GM12878 (cell line): ENCODE measurements at regions of chr4 and their contacts with region 1.

Region 1: GRCh38 chr4:2412885-2413716 is 5.3 kb downstream of the ZFYVE28 start:
- DNase-seq: peak; percentile 91
- ATAC-seq: peak; percentile 81
- H3K4me3 ChIP-seq: peak overlapping the region; percentile 58
- H3K27ac ChIP-seq: peak overlapping the region; percentile 60
- H3K4me1 ChIP-seq: peaks cover 49% of the 10 kb centered on the region
- H3K27me3 ChIP-seq: peaks cover 9 to 12% of the 10 kb centered on the region in 2 experiments
- CTCF ChIP-seq: peak in 2 of 3 experiments; percentile 31 to 42; a peak in 3 of 6 replicates
- EP300 ChIP-seq: peak; percentile 19 to 56; a peak in 1 of 4 replicates
- POLR2A ChIP-seq: no peak
- RAD21 ChIP-seq: no peak

Region 2: DNA sequence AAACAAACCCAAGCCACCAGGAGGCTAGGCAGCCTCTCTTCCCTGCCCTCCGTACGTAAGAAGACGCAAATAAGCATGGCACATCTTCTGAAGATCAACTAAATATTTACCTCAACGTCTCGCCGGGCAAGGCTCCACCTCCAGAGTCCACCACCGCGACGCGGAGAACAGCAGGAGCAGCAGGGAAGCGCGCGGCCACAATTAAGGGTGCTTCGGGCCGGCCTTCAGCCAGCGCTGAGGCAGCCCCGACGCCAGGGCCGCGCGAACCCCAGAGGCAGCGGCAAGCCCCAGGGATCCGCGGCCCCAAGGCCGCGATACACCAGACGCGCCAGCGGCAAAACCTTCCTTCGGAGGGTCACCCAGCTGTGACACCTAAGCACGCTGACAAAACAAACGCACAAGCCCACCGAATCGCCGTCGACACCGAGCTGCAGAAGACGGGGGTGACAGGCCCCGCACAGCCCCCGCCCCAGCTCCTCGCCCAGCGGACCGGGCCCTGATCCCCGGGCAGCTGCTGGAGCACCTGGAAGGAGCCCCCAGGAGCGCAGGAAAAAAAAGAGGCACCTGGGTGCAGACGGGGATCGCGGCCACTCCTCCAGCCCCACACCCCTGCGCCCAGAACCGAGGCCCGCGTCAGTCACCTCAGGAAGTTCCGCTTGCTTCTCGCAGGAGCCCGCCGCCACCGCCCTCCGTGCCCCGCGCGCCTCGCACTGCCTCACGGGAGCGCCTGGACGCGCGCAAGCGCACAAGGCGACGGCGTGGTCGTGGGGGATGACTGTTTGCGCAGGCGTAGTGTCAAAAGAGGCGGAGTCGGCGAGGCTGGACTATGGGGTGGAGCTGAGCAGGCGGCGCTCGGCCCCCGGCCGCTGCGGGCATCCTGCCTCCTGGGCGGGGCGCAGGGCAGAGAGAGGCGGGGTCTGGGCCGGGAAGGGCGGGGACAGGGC is 171.4 kb before region 1 on chr4 and contains the starts of genes HAUS3 and POLN:
- CTCF ChIA-PET with region 1: interaction called, 10 read pairs
- POLR2A ChIA-PET with region 1: interaction called, 4 read pairs
- RAD21 ChIA-PET with region 1: interaction called, 4 read pairs
- SMC1A ChIA-PET with region 1: interaction called, 21 read pairs
- in situ Hi-C with region 1: no loop called
- intact Hi-C with region 1: loop called (anchors 5 kb)
- DNase-seq: peak; percentile 94
- ATAC-seq: peak; percentile 95
- H3K4me3 ChIP-seq: peak within 1 kb of the TSS; percentile 78
- H3K27ac ChIP-seq: peak within 1 kb of the TSS; percentile 70
- H3K4me1 ChIP-seq: peaks cover 6% of the 10 kb centered on the region; the same call in 1 of the 2 replicates
- H3K27me3 ChIP-seq: no peaks in the 10 kb centered on the region
- CTCF ChIP-seq: no peak
- EP300 ChIP-seq: no peak
- POLR2A ChIP-seq: peak; percentile 92
- RAD21 ChIP-seq: no peak
- polyA plus RNA-seq, gene HAUS3: 4.2 to 7.3 TPM
- polyA plus RNA-seq, gene POLN: 0.09 TPM in 1 of 2 experiments, not detected in the other

Region 3: DNA sequence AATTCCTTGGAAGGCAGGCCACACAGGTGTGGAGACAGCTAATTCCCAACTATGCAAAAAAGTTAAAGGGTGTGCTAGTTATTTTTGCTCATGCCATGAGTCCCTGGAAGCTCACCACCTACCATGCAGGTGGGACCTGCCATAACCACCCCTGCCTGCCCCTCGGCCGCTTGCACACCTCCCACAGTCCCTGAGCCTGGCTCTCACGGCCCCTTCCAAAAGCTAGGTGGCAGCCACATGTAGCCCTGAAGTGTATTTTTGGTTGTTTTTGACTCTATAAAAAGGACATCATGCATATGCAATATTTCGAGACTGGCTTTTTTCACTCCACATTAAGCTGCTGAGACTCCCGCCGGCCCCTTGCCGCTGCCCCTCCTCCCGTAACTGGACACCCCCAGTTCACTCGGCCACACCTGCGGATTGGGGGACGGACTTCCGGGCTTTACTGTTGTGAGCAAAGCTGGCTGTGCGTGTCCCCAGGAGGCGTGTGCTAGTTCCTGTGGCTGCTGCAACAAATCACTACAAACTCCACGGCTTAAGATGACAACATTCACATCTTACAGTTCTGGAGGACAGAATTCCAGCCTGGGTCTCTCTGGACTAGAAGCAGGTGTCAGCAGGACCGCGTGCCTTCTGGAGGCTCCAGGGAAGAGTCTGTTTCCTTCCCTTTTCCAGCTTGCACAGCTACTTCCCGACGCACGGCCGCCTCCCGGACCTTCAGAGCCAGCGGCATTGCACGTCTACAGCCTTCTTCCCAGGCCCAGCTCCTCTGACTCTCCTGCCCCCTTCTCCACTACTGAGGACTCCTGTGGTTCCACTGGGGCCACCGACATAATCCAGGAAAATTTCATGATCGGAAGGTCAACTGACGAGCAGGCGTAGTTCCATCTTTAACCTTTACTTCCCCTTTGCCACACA is 19.5 kb before region 1 on chr4:
- CTCF ChIA-PET with region 1: interaction called, 15 read pairs
- POLR2A ChIA-PET with region 1: interaction called, 4 read pairs
- RAD21 ChIA-PET with region 1: no interaction called
- SMC1A ChIA-PET with region 1: interaction called, 12 read pairs
- in situ Hi-C with region 1: no loop called
- intact Hi-C with region 1: no loop called
- DNase-seq: no peak
- ATAC-seq: peak; percentile 85
- H3K4me3 ChIP-seq: 0 out of 2 replicates have a peak overlapping the region, but pooled peaks have one; percentile 5
- H3K27ac ChIP-seq: no peak overlapping the region
- H3K4me1 ChIP-seq: no peaks in the 10 kb centered on the region
- H3K27me3 ChIP-seq: no peaks in the 10 kb centered on the region
- CTCF ChIP-seq: no peak; a peak in 1 of 6 replicates
- EP300 ChIP-seq: no peak
- POLR2A ChIP-seq: no peak
- RAD21 ChIP-seq: no peak

Region 4: DNA sequence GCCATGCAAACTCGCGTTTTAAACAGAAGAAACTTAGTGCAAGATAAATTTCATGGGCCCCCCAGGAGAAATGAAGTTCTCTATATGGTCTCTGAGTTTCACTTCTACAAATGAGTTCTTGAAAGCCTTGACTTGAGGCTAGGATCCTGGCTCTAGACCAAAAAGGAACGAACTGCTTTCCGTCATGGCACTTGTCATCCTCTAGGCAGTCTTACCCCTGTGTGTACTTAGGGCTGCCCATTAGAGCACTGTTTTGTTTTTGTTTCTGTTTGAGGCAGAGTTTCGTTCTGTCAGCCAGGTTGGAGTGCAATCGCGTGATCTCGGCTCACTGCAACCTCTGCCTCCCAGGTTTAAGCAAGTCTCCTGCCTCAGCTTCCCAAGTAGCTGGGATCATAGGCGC is 84.8 kb after region 1 on chr4:
- CTCF ChIA-PET with region 1: no interaction called
- POLR2A ChIA-PET with region 1: no interaction called
- RAD21 ChIA-PET with region 1: no interaction called
- SMC1A ChIA-PET with region 1: no interaction called
- in situ Hi-C with region 1: no loop called
- intact Hi-C with region 1: no loop called
- DNase-seq: peak; percentile 90
- ATAC-seq: peak; percentile 98
- H3K4me3 ChIP-seq: no peak overlapping the region; the same call in 1 of the 2 replicates
- H3K27ac ChIP-seq: peak overlapping the region; percentile 56
- H3K4me1 ChIP-seq: peaks cover 30% of the 10 kb centered on the region
- H3K27me3 ChIP-seq: no peaks in the 10 kb centered on the region
- CTCF ChIP-seq: no peak
- EP300 ChIP-seq: no peak
- POLR2A ChIP-seq: no peak
- RAD21 ChIP-seq: no peak